Left cardiac atrium (tissue), 4 donors: ENCODE measurements at regions of chr19 and their contacts with region 1.

Region 1: GRCh38 chr19:23470873-23471545 is 75.7 kb upstream of the ZNF91 start:
- DNase-seq: no peak
- ATAC-seq: no peak

Region 2: DNA sequence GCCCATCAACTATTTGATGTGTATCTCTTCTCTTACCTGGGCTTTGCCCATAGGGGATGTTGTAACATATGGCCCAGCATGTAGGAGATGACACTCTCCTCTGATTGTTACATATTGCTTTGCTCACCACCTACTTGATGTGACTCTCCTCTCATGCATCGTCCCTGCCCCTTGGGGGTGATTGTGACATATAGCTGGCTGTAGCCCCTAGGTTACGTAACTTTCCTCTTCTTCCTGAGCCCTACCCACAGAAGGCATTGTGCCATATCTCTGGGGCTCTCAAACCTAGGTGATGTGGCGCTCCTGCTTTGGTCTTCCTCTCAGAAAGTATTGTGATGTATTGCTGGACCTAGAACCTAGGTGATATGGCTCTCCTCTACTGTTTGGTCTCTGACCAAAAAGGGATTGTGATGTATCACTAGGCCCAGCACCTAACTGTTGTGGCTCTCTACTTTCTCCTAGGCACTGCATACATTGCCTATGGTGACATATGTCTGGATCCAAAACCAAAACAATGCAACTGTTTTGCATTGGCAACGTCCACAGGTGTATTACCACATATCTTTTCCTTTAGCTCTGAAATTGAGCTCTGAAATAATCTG is 149.0 kb before region 1 on chr19:
- intact Hi-C with region 1: loop called in 1 of 2 experiments (anchors 5 kb)
- DNase-seq: no peak
- ATAC-seq: no peak